ENCODE measurements at regions of chr5 and their contacts with region 1.

Region 1: DNA sequence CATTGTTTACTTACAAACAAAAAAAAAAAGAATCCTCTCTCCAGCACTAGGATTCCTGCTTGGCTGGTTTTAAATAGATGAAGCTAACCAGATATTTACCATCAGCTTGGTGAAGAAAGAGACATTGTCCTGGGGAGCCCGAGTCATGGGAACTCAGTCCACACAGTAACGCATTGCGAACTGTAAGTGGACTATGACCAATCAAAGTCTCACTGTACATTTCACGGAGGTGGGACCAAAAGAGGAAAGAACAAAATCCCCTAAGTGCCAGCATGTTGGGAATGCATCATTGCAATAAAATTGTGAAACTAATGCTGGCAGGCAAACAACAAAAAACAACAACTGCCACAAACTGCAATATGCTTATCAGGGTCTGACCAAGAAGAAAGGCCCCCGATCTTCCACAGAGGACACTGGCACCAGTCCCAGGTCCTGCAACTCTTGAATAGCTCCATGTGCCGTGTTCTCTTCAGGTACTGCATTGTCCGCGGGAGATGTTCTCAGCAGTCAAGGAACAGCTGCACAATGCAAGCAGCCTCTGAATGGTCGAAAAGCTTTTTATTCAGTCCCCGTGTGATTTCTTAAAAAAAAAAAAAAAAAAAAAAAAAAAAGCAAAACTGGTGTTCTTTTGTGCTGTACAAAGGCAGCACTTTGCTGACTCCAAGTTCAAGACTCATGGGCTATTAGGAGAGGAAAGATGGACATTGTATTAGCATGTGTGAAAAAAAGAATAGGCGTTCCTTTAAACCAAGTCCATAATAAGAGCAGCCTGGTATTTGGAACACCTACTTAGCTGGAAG is 38.1 kb downstream of the SEMA6A start:
- DNase-seq: no peak
- H3K4me3 ChIP-seq: no peak overlapping the region
- H3K27ac ChIP-seq: no peak overlapping the region
- H3K4me1 ChIP-seq: peaks cover 3 to 29% (median 15%) of the 10 kb centered on the region in 4 experiments; a peak in 6 of 7 replicates
- H3K27me3 ChIP-seq: no peaks in the 10 kb centered on the region
- CTCF ChIP-seq: no peak
- EP300 ChIP-seq: no peak
- POLR2A ChIP-seq: no peak
- RAD21 ChIP-seq: no peak

Region 2: GRCh38 chr5:116524966-116525365 is 11.5 kb before region 1 on chr5:
- CTCF ChIA-PET with region 1: no interaction called
- POLR2A ChIA-PET with region 1: interaction called, 12 read pairs
- DNase-seq: no peak
- H3K4me3 ChIP-seq: no peak overlapping the region
- H3K27ac ChIP-seq: no peak overlapping the region
- H3K4me1 ChIP-seq: peaks cover 6 to 16% (median 13%) of the 10 kb centered on the region in 4 experiments
- H3K27me3 ChIP-seq: no peaks in the 10 kb centered on the region
- CTCF ChIP-seq: no peak
- EP300 ChIP-seq: no peak
- POLR2A ChIP-seq: no peak
- RAD21 ChIP-seq: no peak

Measured in H1 (cell line).